Dendritic cell treated with granulocyte-macrophage colony-stimulating factor and Interleukin-4, amounts not matched to agents 40 ng/mL and 50 ng/mL, for 4 days (primary cell): ENCODE measurements at regions of chrX and their contacts with region 1.

Region 1: DNA sequence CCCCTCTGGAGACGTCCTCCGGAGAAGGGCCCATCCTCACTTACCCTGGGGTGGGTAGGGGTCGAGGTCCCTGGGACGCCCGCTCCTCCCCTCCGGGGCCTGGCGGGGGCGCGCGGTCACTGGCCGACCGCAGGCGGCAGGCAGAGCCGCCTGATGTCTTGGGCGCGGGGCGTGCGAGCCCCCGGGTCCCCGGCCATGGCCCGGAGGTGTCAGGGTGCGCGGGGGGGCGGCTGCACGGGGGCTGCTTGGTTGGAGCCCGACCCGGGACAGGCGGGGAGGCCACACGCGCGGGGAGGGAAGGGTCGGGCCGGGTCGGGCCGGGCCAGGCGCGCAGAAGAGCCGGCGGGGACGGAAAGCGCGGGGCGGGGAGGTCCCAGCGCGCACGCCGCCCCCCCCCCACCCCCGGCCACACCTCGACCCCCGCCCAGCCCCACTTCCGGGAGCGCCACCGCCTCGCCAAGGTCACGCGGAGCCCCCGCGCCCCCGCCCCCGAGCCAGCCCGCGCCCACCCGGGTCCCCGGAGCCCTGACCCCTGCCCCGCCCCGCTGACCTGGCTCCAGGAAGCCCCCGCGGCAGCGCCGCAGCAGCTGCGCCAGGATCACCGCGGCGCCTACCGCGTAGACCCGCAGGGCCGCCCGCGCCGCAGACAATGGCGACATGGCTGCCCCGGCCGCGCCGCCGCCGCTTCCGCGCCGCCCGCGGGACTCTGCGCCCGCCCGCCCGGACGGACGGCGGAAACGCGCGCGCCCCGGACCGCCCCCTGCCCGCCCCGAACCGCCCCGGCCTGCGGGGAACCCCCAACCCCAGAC is at the starts of genes DHRSX and ZBED1:
- H3K4me3 Mint-ChIP-seq: peak within 1 kb of the TSS; percentile 82
- H3K27ac Mint-ChIP-seq: peak within 1 kb of the TSS; percentile 87
- H3K4me1 Mint-ChIP-seq: peaks cover 24% of the 10 kb centered on the region
- H3K27me3 Mint-ChIP-seq: no peaks in the 10 kb centered on the region

Region 2: DNA sequence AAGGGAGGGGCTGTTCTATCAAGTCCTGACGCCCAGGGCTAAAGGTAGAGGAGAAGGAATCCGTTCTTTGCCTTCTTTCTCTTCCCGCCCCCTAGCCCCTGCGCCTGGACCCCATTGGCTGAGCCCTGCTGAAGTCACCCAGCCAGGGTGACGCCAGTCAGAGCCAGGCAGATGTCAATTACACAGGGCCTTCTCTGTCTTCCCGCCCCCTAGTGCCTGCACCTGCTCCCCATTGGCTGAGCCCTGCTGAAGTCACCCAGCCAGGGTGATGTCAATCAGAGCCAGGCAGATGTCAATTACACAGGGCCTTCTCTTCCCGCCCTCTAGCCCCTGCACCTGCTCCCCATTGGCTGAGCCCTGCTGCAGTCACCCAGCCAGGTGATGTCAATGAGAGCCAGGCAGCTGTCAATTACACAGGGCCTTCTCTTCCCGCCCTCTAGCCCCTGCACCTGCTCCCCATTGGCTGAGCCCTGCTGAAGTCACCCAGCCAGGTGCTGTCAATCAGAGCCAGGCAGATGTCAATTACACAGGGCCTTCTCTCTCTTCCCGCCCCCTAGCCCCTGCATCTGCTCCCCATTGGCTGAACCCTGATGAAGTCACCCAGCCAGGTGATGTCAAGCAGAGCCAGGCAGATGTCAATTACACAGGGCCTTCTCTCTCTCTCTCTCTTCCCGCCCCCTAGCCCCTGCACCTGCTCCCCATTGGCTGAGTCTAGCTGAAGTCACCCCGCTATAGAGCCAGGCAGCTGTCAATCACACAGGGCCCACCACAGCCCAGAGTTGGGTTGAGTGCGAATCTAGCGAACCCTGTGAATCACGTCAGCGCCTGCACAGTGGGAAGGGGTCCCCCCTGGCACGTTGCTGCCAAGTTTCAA is 839.2 kb before region 1 on chrX:
- intact Hi-C with region 1: loop called (anchors 10 kb)
- H3K4me3 Mint-ChIP-seq: peak overlapping the region; percentile 67
- H3K27ac Mint-ChIP-seq: peak overlapping the region; percentile 72
- H3K4me1 Mint-ChIP-seq: peaks cover 27% of the 10 kb centered on the region
- H3K27me3 Mint-ChIP-seq: no peaks in the 10 kb centered on the region

Region 3: GRCh38 chrX:2577844-2578506 is 77.5 kb after region 1 on chrX:
- intact Hi-C with region 1: loop called (anchors 5 kb)
- H3K4me3 Mint-ChIP-seq: no peak overlapping the region
- H3K27ac Mint-ChIP-seq: no peak overlapping the region
- H3K4me1 Mint-ChIP-seq: no peaks in the 10 kb centered on the region
- H3K27me3 Mint-ChIP-seq: peaks cover 32% of the 10 kb centered on the region

Region 4: GRCh38 chrX:2589186-2590030 is 88.9 kb after region 1 on chrX:
- intact Hi-C with region 1: loop called (anchors 5 kb)
- H3K4me3 Mint-ChIP-seq: no peak overlapping the region
- H3K27ac Mint-ChIP-seq: no peak overlapping the region
- H3K4me1 Mint-ChIP-seq: peaks cover 12% of the 10 kb centered on the region
- H3K27me3 Mint-ChIP-seq: peaks cover 36% of the 10 kb centered on the region